GM12878 (cell line): ENCODE measurements at regions of chr2 and their contacts with region 1.

Region 1: DNA sequence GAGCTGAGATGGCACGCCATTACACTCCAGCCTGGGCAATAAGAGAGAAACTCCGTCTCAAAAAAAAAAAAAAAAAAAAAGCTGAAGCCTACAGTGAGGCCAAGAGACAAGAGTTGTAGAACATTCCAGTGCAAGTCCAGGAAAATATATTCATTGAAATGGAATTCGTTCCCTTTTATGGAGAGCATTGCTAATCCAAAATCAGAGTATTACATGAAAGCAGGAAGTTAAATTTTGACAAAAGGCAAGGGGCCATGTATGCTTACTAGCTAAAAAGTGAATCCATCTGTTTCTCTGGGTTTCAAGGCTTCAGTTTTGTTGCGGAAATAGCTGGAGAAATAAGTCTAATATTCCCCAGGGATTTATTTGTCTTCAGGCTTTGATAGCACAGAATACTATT is 471.7 kb downstream of the THSD7B start:
- DNase-seq: no peak
- ATAC-seq: no peak
- H3K4me3 ChIP-seq: no peak overlapping the region
- H3K27ac ChIP-seq: no peak overlapping the region
- H3K4me1 ChIP-seq: no peaks in the 10 kb centered on the region
- H3K27me3 ChIP-seq: no peaks in the 10 kb centered on the region
- CTCF ChIP-seq: no peak
- EP300 ChIP-seq: no peak
- POLR2A ChIP-seq: no peak
- RAD21 ChIP-seq: no peak

Region 2: DNA sequence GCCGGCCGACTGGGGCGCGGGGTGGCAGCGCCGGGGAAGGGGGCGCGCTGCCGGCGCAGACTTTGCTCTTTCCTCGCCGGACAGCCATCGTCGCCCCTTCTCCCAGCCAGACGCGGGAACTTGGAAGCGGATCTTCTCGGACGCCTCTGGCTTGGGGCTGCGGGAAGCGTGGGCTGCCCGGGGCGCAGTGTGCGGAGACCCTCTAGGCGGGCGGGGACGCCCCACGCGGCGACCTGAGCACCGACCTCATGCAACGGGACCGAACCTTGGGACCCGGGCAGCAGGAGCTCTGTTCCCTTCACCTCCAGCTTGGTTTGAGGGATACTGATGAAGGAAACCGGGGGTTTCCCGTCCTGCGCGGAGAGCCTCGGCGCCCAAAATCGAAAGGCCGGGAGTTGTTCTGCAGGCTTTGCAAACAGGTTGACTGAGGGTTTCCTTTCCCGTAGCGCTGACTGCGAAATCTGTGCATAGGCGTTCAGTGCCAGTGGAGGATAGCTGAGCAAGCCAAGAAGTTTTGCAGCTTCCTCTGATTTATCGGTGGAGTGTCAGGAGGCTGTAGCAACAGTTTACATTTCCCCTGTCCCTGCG is 471.2 kb before region 1 on chr2:
- CTCF ChIA-PET with region 1: no interaction called
- POLR2A ChIA-PET with region 1: no interaction called
- RAD21 ChIA-PET with region 1: no interaction called
- SMC1A ChIA-PET with region 1: no interaction called
- in situ Hi-C with region 1: no loop called
- intact Hi-C with region 1: no loop called
- DNase-seq: no peak
- ATAC-seq: peak; percentile 34; the same call in 2 of the 3 replicates
- H3K4me3 ChIP-seq: no peak overlapping the region
- H3K27ac ChIP-seq: no peak overlapping the region
- H3K4me1 ChIP-seq: no peaks in the 10 kb centered on the region
- H3K27me3 ChIP-seq: peaks cover 9 to 18% of the 10 kb centered on the region in 2 experiments
- CTCF ChIP-seq: no peak
- EP300 ChIP-seq: no peak
- POLR2A ChIP-seq: no peak
- RAD21 ChIP-seq: no peak

Region 3: DNA sequence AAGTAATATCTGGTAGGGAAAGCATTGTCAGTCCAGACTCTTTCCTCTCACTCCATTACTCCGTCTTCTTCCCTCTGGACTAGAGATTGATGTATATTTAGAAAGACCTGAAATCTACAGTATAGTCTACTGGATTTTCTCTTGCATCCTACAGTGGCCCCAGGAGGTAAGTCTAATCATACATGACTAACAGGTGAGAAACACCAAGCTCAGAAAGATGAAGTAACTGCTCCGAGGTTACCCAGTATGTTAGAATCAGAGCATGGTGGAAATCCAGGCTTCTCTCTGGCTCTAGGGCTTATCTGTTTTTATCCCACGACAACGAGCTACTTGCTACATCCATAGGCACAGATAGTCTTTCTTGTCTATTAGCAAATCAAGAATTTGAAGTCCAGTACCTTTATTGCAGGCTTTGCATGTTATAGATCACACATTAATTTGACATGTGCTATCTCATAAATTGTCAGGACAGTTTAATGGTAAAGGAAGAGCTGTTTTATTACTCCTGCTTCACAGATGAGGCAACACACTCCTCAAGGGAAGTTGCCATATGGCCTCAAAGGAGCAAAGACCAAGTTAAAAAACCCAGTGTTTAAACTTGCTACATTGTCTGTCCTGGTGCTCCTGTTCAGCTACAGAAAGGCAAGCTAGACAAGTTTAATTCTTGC is 12.5 kb after region 1 on chr2:
- CTCF ChIA-PET with region 1: interaction called, 3 read pairs
- POLR2A ChIA-PET with region 1: interaction called, 3 read pairs
- RAD21 ChIA-PET with region 1: interaction called, 3 read pairs
- SMC1A ChIA-PET with region 1: interaction called, 10 read pairs
- in situ Hi-C with region 1: no loop called
- intact Hi-C with region 1: no loop called
- DNase-seq: no peak
- ATAC-seq: no peak
- H3K4me3 ChIP-seq: no peak overlapping the region
- H3K27ac ChIP-seq: no peak overlapping the region
- H3K4me1 ChIP-seq: no peaks in the 10 kb centered on the region
- H3K27me3 ChIP-seq: no peaks in the 10 kb centered on the region
- CTCF ChIP-seq: no peak
- EP300 ChIP-seq: no peak
- POLR2A ChIP-seq: no peak
- RAD21 ChIP-seq: no peak